Endothelial cell of umbilical vein (primary cell): ENCODE measurements at regions of chr4 and their contacts with region 1.

Region 1: GRCh38 chr4:139530833-139531427 is 25.1 kb downstream of the SETD7 start:
- DNase-seq: peak; percentile 50
- H3K4me3 ChIP-seq: no peak overlapping the region
- H3K27ac ChIP-seq: no peak overlapping the region
- H3K4me1 ChIP-seq: no peaks in the 10 kb centered on the region
- H3K27me3 ChIP-seq: no peaks in the 10 kb centered on the region
- CTCF ChIP-seq: peak; percentile 68
- POLR2A ChIP-seq: no peak

Region 2: GRCh38 chr4:139115226-139115625 is 415.7 kb before region 1 on chr4:
- CTCF ChIA-PET with region 1: no interaction called
- POLR2A ChIA-PET with region 1: no interaction called
- dilution Hi-C with region 1: no loop called
- intact Hi-C with region 1: no loop called
- DNase-seq: no peak
- H3K4me3 ChIP-seq: no peak overlapping the region
- H3K27ac ChIP-seq: no peak overlapping the region
- H3K4me1 ChIP-seq: no peaks in the 10 kb centered on the region
- H3K27me3 ChIP-seq: no peaks in the 10 kb centered on the region
- CTCF ChIP-seq: no peak
- POLR2A ChIP-seq: no peak

Region 3: GRCh38 chr4:139403462-139403861 is 127.5 kb before region 1 on chr4:
- CTCF ChIA-PET with region 1: interaction called, 6 read pairs
- POLR2A ChIA-PET with region 1: no interaction called
- dilution Hi-C with region 1: no loop called
- intact Hi-C with region 1: loop called (anchors 5 kb)
- DNase-seq: peak; percentile 41
- H3K4me3 ChIP-seq: no peak overlapping the region
- H3K27ac ChIP-seq: no peak overlapping the region
- H3K4me1 ChIP-seq: no peaks in the 10 kb centered on the region
- H3K27me3 ChIP-seq: no peaks in the 10 kb centered on the region
- CTCF ChIP-seq: no peak
- POLR2A ChIP-seq: no peak